ENCODE measurements at regions of chr3 and their contacts with region 1.

Region 1: DNA sequence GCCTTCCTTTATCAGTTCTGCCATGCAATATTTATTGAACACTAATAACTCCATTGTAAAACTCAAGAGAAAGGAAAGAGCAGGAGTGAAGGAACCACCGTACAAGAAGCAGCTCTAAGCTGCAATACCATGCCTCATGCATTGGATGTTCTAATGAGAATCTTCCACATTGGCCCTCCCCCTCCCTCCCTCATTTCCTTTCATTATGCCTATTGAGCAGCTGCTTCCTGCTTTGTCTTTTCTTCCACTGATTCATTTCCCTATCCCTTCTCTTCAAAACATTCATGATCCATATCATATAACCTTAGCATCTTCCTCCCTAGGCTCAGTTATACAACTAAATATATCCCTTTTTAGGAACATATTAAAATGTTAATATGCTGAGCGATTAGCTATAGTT is 698.7 kb upstream of the GOLIM4 start:
- DNase-seq: no peak
- H3K4me3 ChIP-seq: no peak overlapping the region
- H3K27ac ChIP-seq: no peak overlapping the region
- H3K4me1 ChIP-seq: no peaks in the 10 kb centered on the region
- H3K27me3 ChIP-seq: no peaks in the 10 kb centered on the region
- CTCF ChIP-seq: no peak

Region 2: GRCh38 chr3:168828943-168829342 is 34.5 kb after region 1 on chr3:
- CTCF ChIA-PET with region 1: no interaction called
- dilution Hi-C with region 1: no loop called
- in situ Hi-C with region 1: no loop called
- intact Hi-C with region 1: loop called (anchors 2 kb)
- DNase-seq: no peak
- H3K4me3 ChIP-seq: no peak overlapping the region
- H3K27ac ChIP-seq: no peak overlapping the region
- H3K4me1 ChIP-seq: no peaks in the 10 kb centered on the region
- H3K27me3 ChIP-seq: peaks cover 2% of the 10 kb centered on the region
- CTCF ChIP-seq: no peak

Measured in mammary epithelial cell (primary cell).